ENCODE measurements at regions of chr2 and their contacts with region 1.

Region 1: DNA sequence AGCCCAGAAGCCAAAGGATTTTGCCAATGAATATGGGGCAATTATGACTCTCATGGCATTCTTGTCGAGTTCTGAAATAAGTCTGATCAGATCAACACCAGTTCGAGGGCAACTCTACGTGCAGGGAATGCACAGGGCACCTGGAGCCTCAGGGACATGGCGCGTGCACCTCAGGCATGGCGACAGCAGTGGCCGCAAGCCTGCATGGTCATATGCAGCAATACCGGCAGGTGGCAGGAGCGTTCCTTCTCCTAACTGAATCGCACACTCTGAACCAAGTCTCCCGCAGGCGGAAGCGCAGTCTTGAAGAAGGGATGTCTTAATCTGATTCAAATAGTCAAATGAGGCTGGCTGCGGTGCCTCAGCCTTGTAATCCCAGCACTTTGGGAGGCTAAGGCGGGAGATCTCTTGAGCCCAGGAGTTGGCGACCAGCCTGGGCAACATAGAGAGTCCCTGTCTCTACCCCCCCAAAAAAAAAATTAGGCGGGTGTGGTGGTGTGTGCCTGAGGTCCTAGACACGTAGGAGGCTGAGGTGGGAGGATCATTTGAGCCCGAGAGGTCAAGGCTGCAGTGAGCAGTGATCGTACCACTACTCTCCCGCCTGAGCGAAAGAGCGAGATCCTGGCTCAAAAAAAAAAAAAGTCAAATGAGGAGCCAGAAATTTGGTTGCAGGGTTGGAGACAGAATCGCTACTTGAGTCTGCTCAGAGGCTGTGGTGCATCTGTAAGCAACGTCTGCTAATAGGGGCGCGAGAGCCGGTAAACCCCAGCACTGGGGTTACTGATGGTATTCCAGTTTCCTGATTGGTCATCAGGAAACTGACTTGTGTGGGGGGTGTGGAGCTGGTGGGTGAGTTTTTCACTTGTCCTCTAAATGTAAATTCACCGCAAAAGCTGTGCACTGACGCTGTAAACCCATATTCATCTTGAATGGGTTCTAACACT is 28.8 kb downstream of the FHL2 start:
- DNase-seq: peak; percentile 77 to 92
- H3K4me3 ChIP-seq: no peak overlapping the region
- H3K4me1 ChIP-seq: no peaks in the 10 kb centered on the region
- H3K27me3 ChIP-seq: no peaks in the 10 kb centered on the region

Region 2: GRCh38 chr2:105517814-105518705 is 148.0 kb after region 1 on chr2:
- in situ Hi-C with region 1: loop called (anchors 5 kb)
- DNase-seq: no peak
- H3K4me3 ChIP-seq: no peak overlapping the region
- H3K4me1 ChIP-seq: no peaks in the 10 kb centered on the region
- H3K27me3 ChIP-seq: peaks cover 6% of the 10 kb centered on the region; the same call in 1 of the 2 replicates

Region 3: GRCh38 chr2:106542811-106543259 is 1172.8 kb after region 1 on chr2:
- in situ Hi-C with region 1: loop called (anchors 25 kb)
- DNase-seq: peak; percentile 37 to 81
- H3K4me3 ChIP-seq: no peak overlapping the region
- H3K4me1 ChIP-seq: no peaks in the 10 kb centered on the region
- H3K27me3 ChIP-seq: no peaks in the 10 kb centered on the region